PC-3 (cell line): ENCODE measurements at regions of chr5 and their contacts with region 1.

Region 1: GRCh38 chr5:131952301-131952857 is 6.9 kb upstream of the MEIKIN start:
- DNase-seq: peak; percentile 46
- ATAC-seq: no peak
- H3K4me3 ChIP-seq: no peak overlapping the region
- H3K27ac ChIP-seq: no peak overlapping the region
- H3K4me1 ChIP-seq: no peaks in the 10 kb centered on the region
- H3K27me3 ChIP-seq: no peaks in the 10 kb centered on the region
- CTCF ChIP-seq: no peak

Region 2: GRCh38 chr5:130727830-130728229 is 1224.5 kb before region 1 on chr5:
- CTCF ChIA-PET with region 1: no interaction called
- POLR2A ChIA-PET with region 1: interaction called, 12 read pairs
- intact Hi-C with region 1: no loop called
- DNase-seq: no peak
- ATAC-seq: no peak
- H3K4me3 ChIP-seq: no peak overlapping the region
- H3K27ac ChIP-seq: no peak overlapping the region
- H3K4me1 ChIP-seq: 0 out of 2 replicates have a peak, but pooled peaks cover 9% of the 10 kb centered on the region
- H3K27me3 ChIP-seq: no peaks in the 10 kb centered on the region
- CTCF ChIP-seq: no peak

Region 3: DNA sequence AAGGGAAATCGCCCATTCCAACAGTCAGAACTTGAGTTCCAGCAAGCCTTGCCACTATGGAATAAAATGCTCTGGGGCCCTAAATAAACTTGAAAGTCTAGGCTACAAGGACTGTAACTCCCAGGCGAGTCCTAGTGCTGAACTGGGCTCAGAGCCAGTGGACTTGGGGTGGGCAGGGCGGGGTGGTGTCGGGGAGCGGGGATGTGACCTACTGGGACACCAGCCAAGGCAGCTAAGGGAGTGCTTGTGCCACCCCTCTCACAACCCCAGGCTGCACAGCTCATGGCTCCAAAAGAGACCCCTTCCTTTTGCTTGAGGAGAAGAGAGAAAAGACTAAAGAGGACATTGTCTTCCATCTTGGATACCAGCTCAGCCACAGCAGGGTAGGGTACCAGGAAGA is 68.4 kb before region 1 on chr5:
- CTCF ChIA-PET with region 1: no interaction called
- POLR2A ChIA-PET with region 1: no interaction called
- intact Hi-C with region 1: no loop called
- DNase-seq: no peak
- ATAC-seq: no peak
- H3K4me3 ChIP-seq: no peak overlapping the region
- H3K27ac ChIP-seq: no peak overlapping the region
- H3K4me1 ChIP-seq: no peaks in the 10 kb centered on the region
- H3K27me3 ChIP-seq: no peaks in the 10 kb centered on the region
- CTCF ChIP-seq: no peak

Region 4: DNA sequence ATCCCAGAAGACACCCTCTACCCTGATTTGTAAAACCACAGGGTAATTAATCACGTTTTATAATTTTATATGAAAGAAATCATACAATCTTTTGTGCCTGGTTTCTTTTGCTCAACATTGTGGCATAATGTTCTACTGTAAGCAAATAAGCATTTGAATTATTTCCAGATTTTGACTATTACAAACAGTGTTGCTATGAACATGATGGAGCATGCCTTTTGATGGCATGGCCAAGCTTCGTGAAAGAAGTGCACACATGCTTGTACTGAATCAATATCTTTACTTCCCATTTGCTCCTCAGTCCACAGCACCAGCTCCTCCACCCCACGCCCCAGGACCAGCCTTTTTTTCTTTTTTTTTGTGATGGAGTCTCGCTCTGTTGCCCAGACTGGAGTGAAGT is 29.1 kb after region 1 on chr5:
- CTCF ChIA-PET with region 1: no interaction called
- POLR2A ChIA-PET with region 1: interaction called, 14 read pairs
- intact Hi-C with region 1: no loop called
- DNase-seq: no peak
- ATAC-seq: no peak
- H3K4me3 ChIP-seq: no peak overlapping the region
- H3K27ac ChIP-seq: no peak overlapping the region
- H3K4me1 ChIP-seq: no peaks in the 10 kb centered on the region
- H3K27me3 ChIP-seq: no peaks in the 10 kb centered on the region
- CTCF ChIP-seq: no peak

Region 5: DNA sequence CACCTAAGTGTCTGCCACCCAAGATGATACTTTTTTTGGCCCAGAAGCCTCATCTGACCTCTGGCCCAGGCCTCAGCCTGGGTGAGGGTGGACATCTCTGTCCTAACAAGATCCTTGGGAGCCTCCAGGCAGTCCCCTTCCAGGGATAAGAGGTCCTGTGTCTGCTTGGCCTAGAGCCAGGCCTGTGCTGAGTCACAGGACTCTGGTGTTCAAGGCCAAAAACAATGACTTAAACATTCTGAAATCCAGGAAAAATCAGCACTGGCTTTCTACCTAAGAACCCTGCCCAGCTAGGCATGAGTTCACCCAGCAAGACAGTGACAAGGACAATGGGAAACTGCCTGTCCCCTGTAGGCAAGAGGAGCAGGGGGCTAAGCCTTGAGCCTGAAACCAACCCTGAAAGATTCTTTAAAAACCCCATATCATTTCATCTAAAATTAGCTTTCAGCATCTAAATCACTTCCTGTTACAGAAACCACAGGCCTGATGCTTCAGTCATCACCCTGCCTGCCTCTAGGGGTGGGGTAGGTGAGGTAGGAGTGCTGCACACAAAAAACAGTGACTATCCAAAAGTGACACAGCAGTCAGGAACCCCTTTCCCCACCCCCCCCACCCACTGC is 151.1 kb after region 1 on chr5:
- CTCF ChIA-PET with region 1: no interaction called
- POLR2A ChIA-PET with region 1: no interaction called
- intact Hi-C with region 1: no loop called
- DNase-seq: peak; percentile 94
- ATAC-seq: peak; percentile 69
- H3K4me3 ChIP-seq: no peak overlapping the region
- H3K27ac ChIP-seq: peak overlapping the region; percentile 96
- H3K4me1 ChIP-seq: peaks cover 45% of the 10 kb centered on the region
- H3K27me3 ChIP-seq: no peaks in the 10 kb centered on the region
- CTCF ChIP-seq: no peak